ENCODE measurements at regions of chr7 and their contacts with region 1.

Region 1: GRCh38 chr7:8134089-8134733 is 127.8 kb downstream of the ICA1 start:
- DNase-seq: peak in 1 of 2 donors; percentile 65
- ATAC-seq: peak; percentile 40 to 59 (median 56)
- H3K4me3 ChIP-seq: no peak overlapping the region
- H3K4me3 Mint-ChIP-seq: peak overlapping the region; percentile 75
- H3K27ac ChIP-seq: peak overlapping the region; percentile 69
- H3K27ac Mint-ChIP-seq: peak overlapping the region; percentile 88 to 97
- H3K4me1 ChIP-seq: peaks cover 44% of the 10 kb centered on the region
- H3K4me1 Mint-ChIP-seq: peaks cover 60 to 62% of the 10 kb centered on the region in 2 donors
- H3K27me3 ChIP-seq: no peaks in the 10 kb centered on the region
- H3K27me3 Mint-ChIP-seq: no peaks in the 10 kb centered on the region
- CTCF ChIP-seq: no peak

Region 2: GRCh38 chr7:7640221-7641128 is 493.7 kb before region 1 on chr7 and contains the start of gene UMAD1:
- intact Hi-C with region 1: loop called (anchors 2 kb)
- DNase-seq: peak; percentile 96 to 99
- ATAC-seq: peak; percentile 92 to 99 (median 95)
- H3K4me3 ChIP-seq: peak within 1 kb of the TSS; percentile 77
- H3K4me3 Mint-ChIP-seq: peak within 1 kb of the TSS; percentile 93
- H3K27ac ChIP-seq: peak within 1 kb of the TSS; percentile 90
- H3K27ac Mint-ChIP-seq: peak within 1 kb of the TSS; percentile 94 to 98
- H3K4me1 ChIP-seq: peaks cover 11% of the 10 kb centered on the region
- H3K4me1 Mint-ChIP-seq: peaks cover 26 to 42% of the 10 kb centered on the region in 2 donors
- H3K27me3 ChIP-seq: no peaks in the 10 kb centered on the region
- H3K27me3 Mint-ChIP-seq: no peaks in the 10 kb centered on the region
- CTCF ChIP-seq: no peak
- total RNA-seq, gene UMAD1: 12.3 to 16.5 (median 14.6) TPM

Region 3: GRCh38 chr7:7944619-7945282 is 189.5 kb before region 1 on chr7:
- intact Hi-C with region 1: loop called (anchors 10 kb)
- DNase-seq: peak; percentile 19 to 77
- ATAC-seq: peak; percentile 79 to 85 (median 82)
- H3K4me3 ChIP-seq: peak overlapping the region; percentile 21
- H3K4me3 Mint-ChIP-seq: peak overlapping the region; percentile 73
- H3K27ac ChIP-seq: peak overlapping the region; percentile 71
- H3K27ac Mint-ChIP-seq: peak overlapping the region; percentile 81 to 86
- H3K4me1 ChIP-seq: peaks cover 26% of the 10 kb centered on the region
- H3K4me1 Mint-ChIP-seq: peaks cover 51 to 53% of the 10 kb centered on the region in 2 donors
- H3K27me3 ChIP-seq: no peaks in the 10 kb centered on the region
- H3K27me3 Mint-ChIP-seq: no peaks in the 10 kb centered on the region
- CTCF ChIP-seq: no peak

Region 4: DNA sequence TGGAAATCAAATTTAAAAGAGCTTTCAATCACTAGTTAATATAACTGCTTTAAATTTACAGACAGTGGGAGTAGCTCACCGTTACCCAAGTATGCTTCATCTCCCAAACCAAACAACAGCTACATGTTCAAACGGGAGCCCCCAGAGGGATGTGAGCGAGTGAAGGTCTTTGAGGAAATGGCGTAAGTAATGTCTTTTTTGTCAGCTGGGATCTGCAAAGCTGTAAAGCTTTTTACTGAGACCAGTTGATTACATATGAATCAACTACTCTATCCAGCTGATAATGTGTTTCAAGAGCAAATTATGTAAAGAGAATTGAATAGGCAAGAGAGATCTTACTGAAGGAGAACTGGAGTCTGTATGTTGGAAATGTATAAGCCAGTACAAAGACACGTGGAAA is 49.4 kb before region 1 on chr7:
- intact Hi-C with region 1: no loop called
- DNase-seq: no peak
- ATAC-seq: no peak
- H3K4me3 ChIP-seq: no peak overlapping the region
- H3K4me3 Mint-ChIP-seq: no peak overlapping the region
- H3K27ac ChIP-seq: no peak overlapping the region
- H3K27ac Mint-ChIP-seq: peak overlapping the region in 1 of 2 donors; percentile 38
- H3K4me1 ChIP-seq: no peaks in the 10 kb centered on the region
- H3K4me1 Mint-ChIP-seq: peaks cover under 1 to 24% of the 10 kb centered on the region in 2 donors
- H3K27me3 ChIP-seq: no peaks in the 10 kb centered on the region
- H3K27me3 Mint-ChIP-seq: no peaks in the 10 kb centered on the region
- CTCF ChIP-seq: no peak

Region 5: GRCh38 chr7:8152489-8153192 is 18.4 kb after region 1 on chr7:
- intact Hi-C with region 1: loop called (anchors 1 kb)
- DNase-seq: peak; percentile 52 to 55
- ATAC-seq: peak; percentile 57 to 74 (median 68)
- H3K4me3 ChIP-seq: no peak overlapping the region
- H3K4me3 Mint-ChIP-seq: peak overlapping the region; percentile 53
- H3K27ac ChIP-seq: peak overlapping the region; percentile 0
- H3K27ac Mint-ChIP-seq: peak overlapping the region; percentile 75 to 95
- H3K4me1 ChIP-seq: peaks cover 9% of the 10 kb centered on the region
- H3K4me1 Mint-ChIP-seq: peaks cover 39 to 42% of the 10 kb centered on the region in 2 donors
- H3K27me3 ChIP-seq: no peaks in the 10 kb centered on the region
- H3K27me3 Mint-ChIP-seq: peaks cover 0 to 4% of the 10 kb centered on the region in 2 donors
- CTCF ChIP-seq: no peak

Region 6: GRCh38 chr7:8190119-8190895 is 56.1 kb after region 1 on chr7:
- intact Hi-C with region 1: loop called (anchors 5 kb)
- DNase-seq: peak; percentile 33 to 87
- ATAC-seq: peak; percentile 68 to 90 (median 88)
- H3K4me3 ChIP-seq: no peak overlapping the region
- H3K4me3 Mint-ChIP-seq: no peak overlapping the region
- H3K27ac ChIP-seq: no peak overlapping the region
- H3K27ac Mint-ChIP-seq: no peak overlapping the region
- H3K4me1 ChIP-seq: peaks cover 6% of the 10 kb centered on the region
- H3K4me1 Mint-ChIP-seq: peaks cover 11 to 26% of the 10 kb centered on the region in 2 donors
- H3K27me3 ChIP-seq: peaks cover 4% of the 10 kb centered on the region
- H3K27me3 Mint-ChIP-seq: peaks cover 8 to 9% of the 10 kb centered on the region in 2 donors
- CTCF ChIP-seq: peak; percentile 85